A549 (cell line): ENCODE measurements at regions of chr19 and their contacts with region 1.

Region 1: GRCh38 chr19:18388100-18388959 is 2.4 kb downstream of the GDF15 start:
- DNase-seq: peak in 1 of 2 experiments; percentile 72
- ATAC-seq: peak in 1 of 2 experiments; percentile 32; a peak in 3 of 6 replicates
- H3K4me3 ChIP-seq: peak overlapping the region; percentile 98
- H3K27ac ChIP-seq: peak overlapping the region; percentile 97 to 99
- H3K4me1 ChIP-seq: peaks cover 26% of the 10 kb centered on the region
- CTCF ChIP-seq: peak; percentile 68
- EP300 ChIP-seq: no peak
- POLR2A ChIP-seq: no peak
- RAD21 ChIP-seq: peak; percentile 49 to 54; a peak in 4 of 5 replicates

Region 2: GRCh38 chr19:18349524-18350128 is 38.7 kb before region 1 on chr19:
- CTCF ChIA-PET with region 1: interaction called, 58 read pairs
- POLR2A ChIA-PET with region 1: interaction called, 12 read pairs
- DNase-seq: peak; percentile 61 to 69
- ATAC-seq: peak; percentile 68 to 87; a peak in 4 of 6 replicates
- H3K4me3 ChIP-seq: no peak overlapping the region
- H3K27ac ChIP-seq: peak overlapping the region; percentile 67 to 77
- H3K4me1 ChIP-seq: peaks cover 7% of the 10 kb centered on the region; the same call in 1 of the 3 replicates
- CTCF ChIP-seq: peak; percentile 84
- EP300 ChIP-seq: no peak
- POLR2A ChIP-seq: no peak
- RAD21 ChIP-seq: peak; percentile 93

Region 3: DNA sequence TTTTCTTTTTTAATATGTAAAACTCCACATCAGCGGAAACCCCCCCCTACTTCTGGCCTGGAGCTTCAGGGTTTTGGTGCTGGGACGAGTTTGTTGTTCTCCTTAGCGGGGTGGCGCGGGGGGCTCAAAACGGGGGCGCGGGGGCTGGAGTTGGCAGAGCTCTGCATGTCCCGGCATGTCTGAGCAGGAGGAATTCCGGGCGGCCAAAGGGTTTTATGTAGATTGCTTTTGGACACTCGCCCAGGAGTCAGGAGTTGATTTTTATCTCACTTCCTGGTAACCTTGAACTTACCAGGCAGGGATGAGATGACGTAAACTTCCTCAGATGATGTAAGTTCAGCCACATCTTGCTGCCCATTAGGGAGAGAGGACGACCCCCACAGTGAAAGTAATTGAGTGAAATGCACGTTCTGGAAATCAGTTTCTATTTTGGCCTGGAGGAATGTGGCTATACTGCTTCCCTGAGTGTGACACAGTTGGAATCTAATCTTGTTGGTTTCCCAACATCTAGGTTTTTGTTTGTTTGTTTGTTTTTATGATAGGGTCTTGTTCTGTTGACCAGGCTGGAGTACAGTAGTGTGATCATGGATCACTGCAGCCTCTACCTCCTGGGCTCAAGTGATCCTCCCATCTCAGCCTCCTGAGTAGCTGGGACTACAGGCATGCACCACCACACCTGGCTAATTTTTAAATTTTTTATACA is 23.4 kb before region 1 on chr19:
- CTCF ChIA-PET with region 1: interaction called, 24 read pairs
- POLR2A ChIA-PET with region 1: interaction called, 36 read pairs
- DNase-seq: peak; percentile 71 to 98
- ATAC-seq: peak; percentile 82 to 83
- H3K4me3 ChIP-seq: no peak overlapping the region
- H3K27ac ChIP-seq: peak overlapping the region; percentile 97 to 99
- H3K4me1 ChIP-seq: peaks cover 45% of the 10 kb centered on the region
- CTCF ChIP-seq: no peak
- EP300 ChIP-seq: peak; percentile 97 to 98
- POLR2A ChIP-seq: no peak
- RAD21 ChIP-seq: no peak; a peak in 2 of 5 replicates

Region 4: GRCh38 chr19:18401580-18402112 is 13.3 kb after region 1 on chr19:
- CTCF ChIA-PET with region 1: interaction called, 21 read pairs
- POLR2A ChIA-PET with region 1: interaction called, 10 read pairs
- DNase-seq: peak in 1 of 2 experiments; percentile 85
- ATAC-seq: peak; percentile 91 to 94
- H3K4me3 ChIP-seq: no peak overlapping the region
- H3K27ac ChIP-seq: peak overlapping the region; percentile 83 to 91
- H3K4me1 ChIP-seq: peaks cover 39% of the 10 kb centered on the region
- CTCF ChIP-seq: peak; percentile 45
- EP300 ChIP-seq: no peak
- POLR2A ChIP-seq: no peak
- RAD21 ChIP-seq: peak; percentile 29 to 34; a peak in 3 of 5 replicates

Region 5: DNA sequence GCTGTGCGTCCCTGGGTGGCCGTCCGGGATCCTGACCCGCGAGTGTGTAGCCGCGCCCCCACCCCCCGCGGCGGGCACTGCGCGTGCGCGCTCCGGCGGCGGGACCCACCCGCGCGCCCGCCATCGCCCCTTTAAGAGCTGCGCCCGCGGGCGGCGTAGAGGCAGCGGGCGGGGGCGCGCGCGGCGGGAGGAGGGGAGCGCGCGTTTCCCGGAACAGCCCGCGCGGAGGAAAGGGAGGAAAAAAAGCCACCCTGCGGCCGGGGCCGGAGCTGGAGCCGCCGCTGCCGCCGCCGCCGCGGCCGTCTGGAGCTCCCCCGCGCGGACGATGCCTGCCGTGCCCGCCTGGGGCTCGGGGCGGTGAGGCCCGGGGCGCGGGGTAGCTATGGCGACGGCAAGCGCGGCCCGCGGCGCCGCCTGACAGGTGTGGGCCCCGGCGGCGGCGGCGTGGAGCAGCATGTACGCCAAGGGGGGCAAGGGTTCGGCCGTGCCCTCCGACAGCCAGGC is 30.9 kb after region 1 on chr19 and contains the start of gene SSBP4:
- CTCF ChIA-PET with region 1: interaction called, 75 read pairs
- POLR2A ChIA-PET with region 1: interaction called, 28 read pairs
- DNase-seq: peak in 1 of 2 experiments; percentile 79
- ATAC-seq: peak in 1 of 2 experiments; percentile 25; a peak in 2 of 6 replicates
- H3K4me3 ChIP-seq: peak within 1 kb of the TSS; percentile 77
- H3K27ac ChIP-seq: peak within 1 kb of the TSS; percentile 96 to 100
- H3K4me1 ChIP-seq: peaks cover 52% of the 10 kb centered on the region
- CTCF ChIP-seq: peak; percentile 32; the same call in 2 of the 3 replicates
- EP300 ChIP-seq: no peak
- POLR2A ChIP-seq: no peak
- RAD21 ChIP-seq: no peak
- polyA plus RNA-seq, gene SSBP4: 5.4 and 6.9 TPM in 2 replicates

Region 6: DNA sequence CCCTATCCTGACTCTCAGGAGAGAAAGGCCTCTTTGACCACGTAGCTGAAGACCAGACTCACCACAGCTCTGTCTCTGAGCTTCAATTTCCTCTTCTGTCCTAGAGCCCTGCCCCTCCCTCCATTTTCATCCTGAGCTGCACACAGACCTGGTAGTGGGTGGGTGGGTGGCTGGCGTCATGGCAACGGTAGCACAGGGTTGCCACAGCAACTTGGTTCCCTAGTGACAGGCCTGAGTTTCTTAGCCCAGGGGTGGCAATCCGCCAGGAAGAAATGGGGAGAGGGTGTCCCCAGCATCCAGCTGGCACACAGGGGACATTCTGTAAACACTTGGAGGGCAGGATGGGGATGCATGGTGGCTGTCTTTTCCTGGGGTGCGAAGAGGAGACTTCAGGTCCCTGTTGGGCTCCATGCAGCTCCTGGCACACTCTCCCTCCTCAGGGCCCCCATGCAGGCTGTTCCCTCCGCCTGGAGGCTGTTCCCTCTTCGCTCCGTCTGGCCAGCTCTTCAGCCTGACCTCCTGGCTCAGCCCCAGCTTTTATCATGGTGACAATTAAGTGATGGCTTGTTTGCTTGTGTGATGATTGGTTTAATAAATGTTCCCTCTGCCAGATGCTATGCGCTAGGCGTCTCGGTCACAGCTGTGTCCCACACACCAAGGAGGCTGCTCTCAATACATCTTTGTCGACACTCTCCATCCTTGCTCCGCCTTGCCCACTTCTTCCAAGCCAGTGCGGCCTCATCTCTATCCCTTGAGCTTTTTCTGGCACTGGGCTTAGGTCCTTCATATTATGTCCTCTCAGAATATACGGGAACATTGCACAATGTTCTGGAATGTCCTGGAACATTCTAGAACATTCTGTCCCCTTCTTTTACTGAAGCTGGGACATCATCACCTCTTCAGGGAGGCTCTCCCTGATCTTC is 241.1 kb after region 1 on chr19:
- CTCF ChIA-PET with region 1: no interaction called
- POLR2A ChIA-PET with region 1: no interaction called
- DNase-seq: no peak
- ATAC-seq: no peak
- H3K4me3 ChIP-seq: no peak overlapping the region
- H3K27ac ChIP-seq: peak overlapping the region in 1 of 2 experiments; percentile 44; a peak in 1 of 6 replicates
- H3K4me1 ChIP-seq: no peaks in the 10 kb centered on the region
- CTCF ChIP-seq: no peak
- EP300 ChIP-seq: no peak
- POLR2A ChIP-seq: no peak
- RAD21 ChIP-seq: no peak